ENCODE measurements at regions of chr3 and their contacts with region 1.

Region 1: GRCh38 chr3:194351952-194352536 is 916 bp upstream of the CPN2 start:
- DNase-seq: no peak
- ATAC-seq: no peak
- H3K4me3 ChIP-seq: no peak overlapping the region
- H3K27ac ChIP-seq: no peak overlapping the region
- H3K4me1 ChIP-seq: peaks cover 3% of the 10 kb centered on the region
- H3K27me3 ChIP-seq: peaks cover 7% of the 10 kb centered on the region; the same call in 1 of the 2 replicates
- CTCF ChIP-seq: no peak
- POLR2A ChIP-seq: no peak
- RAD21 ChIP-seq: no peak

Region 2: GRCh38 chr3:194364652-194365434 is 12.8 kb after region 1 on chr3:
- CTCF ChIA-PET with region 1: no interaction called
- POLR2A ChIA-PET with region 1: no interaction called
- dilution Hi-C with region 1: no loop called
- in situ Hi-C with region 1: no loop called
- intact Hi-C with region 1: loop called (anchors 1 kb)
- DNase-seq: peak; percentile 94
- ATAC-seq: peak; percentile 76
- H3K4me3 ChIP-seq: no peak overlapping the region
- H3K27ac ChIP-seq: peak overlapping the region; percentile 72
- H3K4me1 ChIP-seq: peaks cover 30% of the 10 kb centered on the region
- H3K27me3 ChIP-seq: peaks cover 5% of the 10 kb centered on the region; the same call in 1 of the 2 replicates
- CTCF ChIP-seq: no peak
- POLR2A ChIP-seq: no peak
- RAD21 ChIP-seq: no peak

Region 3: DNA sequence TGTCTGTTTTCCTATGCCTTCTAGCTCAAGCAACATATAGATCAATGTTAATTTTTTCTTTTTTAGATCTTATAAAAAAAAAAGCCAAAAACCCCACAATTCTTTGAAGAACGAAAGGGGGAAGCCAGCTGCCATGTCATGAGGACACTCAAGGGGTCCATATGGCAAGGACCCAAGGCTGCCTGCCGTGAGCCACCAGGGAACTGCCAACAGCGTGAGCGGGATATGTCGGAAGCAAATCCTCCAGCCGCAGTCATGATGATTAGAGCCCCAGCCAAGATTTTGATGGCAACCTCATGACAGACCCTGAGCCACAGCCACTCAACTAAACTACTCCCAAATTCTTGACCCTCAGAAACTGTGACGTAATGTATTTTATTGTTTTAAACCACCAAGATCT is 40.5 kb after region 1 on chr3:
- CTCF ChIA-PET with region 1: no interaction called
- POLR2A ChIA-PET with region 1: interaction called, 5 read pairs
- dilution Hi-C with region 1: no loop called
- in situ Hi-C with region 1: loop called (anchors 5 kb)
- intact Hi-C with region 1: no loop called
- DNase-seq: no peak
- ATAC-seq: no peak
- H3K4me3 ChIP-seq: no peak overlapping the region
- H3K27ac ChIP-seq: no peak overlapping the region
- H3K4me1 ChIP-seq: peaks cover 8% of the 10 kb centered on the region
- H3K27me3 ChIP-seq: peaks cover 22% of the 10 kb centered on the region
- CTCF ChIP-seq: no peak
- POLR2A ChIP-seq: no peak
- RAD21 ChIP-seq: no peak

Region 4: GRCh38 chr3:194418671-194419070 is 66.6 kb after region 1 on chr3:
- CTCF ChIA-PET with region 1: no interaction called
- POLR2A ChIA-PET with region 1: no interaction called
- dilution Hi-C with region 1: no loop called
- in situ Hi-C with region 1: no loop called
- intact Hi-C with region 1: no loop called
- DNase-seq: no peak
- ATAC-seq: no peak
- H3K4me3 ChIP-seq: no peak overlapping the region
- H3K27ac ChIP-seq: no peak overlapping the region
- H3K4me1 ChIP-seq: peaks cover 6% of the 10 kb centered on the region
- H3K27me3 ChIP-seq: no peaks in the 10 kb centered on the region
- CTCF ChIP-seq: no peak
- POLR2A ChIP-seq: no peak
- RAD21 ChIP-seq: no peak